Heart right ventricle (tissue), 16 donors: ENCODE measurements at regions of chr13 and their contacts with region 1.

Region 1: DNA sequence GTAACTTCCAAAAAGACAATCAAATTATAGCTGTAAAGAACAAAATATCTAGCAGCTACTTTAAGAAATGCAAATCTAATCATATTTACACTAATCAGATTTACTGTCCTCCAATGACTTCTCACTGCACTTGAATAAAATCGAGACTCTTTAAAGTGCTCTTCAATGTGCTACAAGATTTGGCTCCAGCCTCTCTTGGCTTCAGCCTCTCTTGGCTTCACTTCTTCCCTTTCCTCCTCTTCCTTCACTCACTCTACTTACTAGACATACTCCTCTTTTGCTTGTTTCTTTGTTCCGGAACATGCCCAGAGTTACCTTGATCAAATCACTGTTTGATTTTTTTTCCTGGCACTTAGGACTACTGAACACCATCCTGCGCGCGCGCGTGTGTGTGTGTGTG is 495.4 kb downstream of the LMO7 start:
- DNase-seq: no peak
- ATAC-seq: peak in 1 of 8 donors; percentile 29
- H3K4me3 ChIP-seq: no peak overlapping the region
- H3K27ac ChIP-seq: no peak overlapping the region
- H3K4me1 ChIP-seq: peaks cover 0 to 9% (median 0%) of the 10 kb centered on the region in 9 donors
- H3K27me3 ChIP-seq: no peaks in the 10 kb centered on the region
- CTCF ChIP-seq: no peak

Region 2: DNA sequence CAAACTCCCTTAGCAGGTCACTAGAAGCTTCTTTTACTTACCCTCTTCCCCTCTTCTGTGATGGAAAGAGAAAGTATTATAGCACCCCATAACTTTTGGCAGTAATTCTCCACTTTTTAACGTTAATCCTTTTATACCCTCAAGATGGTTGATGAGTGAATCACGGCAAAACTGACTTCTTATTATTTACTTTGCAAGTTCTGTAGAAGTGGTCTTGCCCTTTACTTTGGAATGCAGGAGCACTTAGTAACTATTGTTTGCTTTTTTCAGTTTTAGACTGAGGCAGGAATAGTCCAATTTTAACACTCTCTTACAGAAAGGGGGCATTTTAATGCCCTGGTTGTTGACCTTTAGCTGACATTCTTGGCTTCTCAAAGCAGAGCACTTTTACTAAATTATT is 235.3 kb before region 1 on chr13:
- intact Hi-C with region 1: loop called in 1 of 10 experiments (anchors 10 kb)
- DNase-seq: no peak
- ATAC-seq: no peak
- H3K4me3 ChIP-seq: no peak overlapping the region
- H3K27ac ChIP-seq: no peak overlapping the region
- H3K4me1 ChIP-seq: peaks cover 0 to under 1% (median 0%) of the 10 kb centered on the region in 9 donors
- H3K27me3 ChIP-seq: no peaks in the 10 kb centered on the region
- CTCF ChIP-seq: no peak